Activated CD8-positive, alpha-beta T cell treated with anti-CD3 and anti-CD28 coated beads for 36 hours (primary cell): ENCODE measurements at regions of chr22 and their contacts with region 1.

Region 1: GRCh38 chr22:25067851-25068421 is 115.4 kb downstream of the KIAA1671 start:
- DNase-seq: peak; percentile 90
- ATAC-seq: peak; percentile 74
- H3K4me3 Mint-ChIP-seq: peak overlapping the region; percentile 78
- H3K27ac Mint-ChIP-seq: peak overlapping the region; percentile 97
- H3K4me1 Mint-ChIP-seq: peaks cover 91% of the 10 kb centered on the region
- H3K27me3 Mint-ChIP-seq: no peaks in the 10 kb centered on the region
- CTCF ChIP-seq: no peak

Region 2: DNA sequence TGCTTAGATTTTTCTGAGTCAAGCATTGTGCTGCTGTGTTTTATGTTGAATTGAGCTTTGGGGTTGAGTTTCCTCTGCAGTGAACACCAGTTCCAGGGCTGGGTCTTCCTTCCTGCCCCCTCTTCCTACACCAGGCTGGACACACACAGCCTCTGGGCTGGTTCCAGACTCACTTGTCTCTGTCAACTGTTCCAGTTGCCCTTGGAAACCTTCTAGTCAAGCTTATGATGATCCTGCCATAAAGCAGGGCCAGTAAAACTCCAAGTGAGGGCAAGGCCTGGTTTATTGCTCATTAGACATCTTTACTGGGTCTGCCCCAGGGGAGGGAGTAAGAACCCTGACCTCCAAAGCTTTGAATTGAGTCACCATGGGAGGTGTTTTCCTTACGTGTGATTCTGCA is 54.3 kb before region 1 on chr22:
- CTCF ChIA-PET with region 1: no interaction called
- POLR2A ChIA-PET with region 1: no interaction called
- intact Hi-C with region 1: no loop called
- DNase-seq: no peak
- ATAC-seq: no peak
- H3K4me3 Mint-ChIP-seq: no peak overlapping the region
- H3K27ac Mint-ChIP-seq: no peak overlapping the region
- H3K4me1 Mint-ChIP-seq: no peaks in the 10 kb centered on the region
- H3K27me3 Mint-ChIP-seq: no peaks in the 10 kb centered on the region
- CTCF ChIP-seq: no peak

Region 3: GRCh38 chr22:25027959-25028840 is 39.7 kb before region 1 on chr22:
- CTCF ChIA-PET with region 1: no interaction called
- POLR2A ChIA-PET with region 1: no interaction called
- intact Hi-C with region 1: no loop called
- DNase-seq: peak; percentile 43
- ATAC-seq: no peak
- H3K4me3 Mint-ChIP-seq: no peak overlapping the region
- H3K27ac Mint-ChIP-seq: no peak overlapping the region
- H3K4me1 Mint-ChIP-seq: peaks cover 6% of the 10 kb centered on the region
- H3K27me3 Mint-ChIP-seq: no peaks in the 10 kb centered on the region
- CTCF ChIP-seq: no peak

Region 4: DNA sequence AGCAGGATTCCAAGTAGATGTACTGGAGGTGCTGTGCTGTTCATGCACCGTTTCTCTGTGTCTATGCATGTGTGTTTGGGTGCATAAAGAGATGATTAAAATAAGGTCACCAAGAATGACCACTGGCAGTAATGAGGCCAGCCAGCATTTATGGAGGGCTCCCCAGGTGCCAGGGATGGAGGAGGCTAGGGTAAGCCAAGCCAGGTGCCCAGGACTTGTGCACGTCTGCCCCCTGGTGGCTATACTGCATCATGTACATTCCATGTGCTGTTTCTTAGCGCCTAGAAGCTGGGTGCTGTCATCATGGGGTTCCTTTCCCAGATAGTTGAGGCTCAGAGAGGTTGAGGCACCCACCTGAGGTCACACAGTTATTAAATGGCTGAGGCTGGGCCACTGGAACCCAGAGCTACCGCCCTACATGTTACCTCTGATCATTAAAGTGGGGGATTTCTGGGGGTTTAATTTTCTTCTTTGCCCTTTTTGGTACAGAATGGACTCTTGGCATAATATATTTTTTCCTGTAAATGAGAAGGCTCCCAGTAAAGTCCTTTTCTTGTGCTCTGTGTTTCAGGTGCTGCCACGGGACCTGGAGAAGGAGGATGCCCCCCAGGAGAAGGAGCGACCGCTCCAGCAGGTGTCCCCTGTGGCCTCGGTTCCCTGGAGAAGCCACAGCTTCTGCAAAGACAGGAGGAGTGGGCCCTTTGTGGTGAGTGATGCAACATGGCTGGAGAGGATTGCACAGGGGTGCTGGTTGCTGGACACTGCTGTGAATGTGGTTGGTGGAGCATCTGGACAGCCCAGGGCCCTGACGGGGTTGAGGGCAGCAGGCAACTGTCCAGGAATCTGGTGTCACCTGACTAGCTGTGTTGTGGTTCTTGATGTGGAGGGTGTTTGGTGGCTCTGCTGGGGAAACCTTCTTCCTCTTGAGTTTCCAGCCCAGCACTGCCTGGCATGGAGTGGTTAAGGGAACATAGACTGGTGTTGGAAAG is 19.0 kb before region 1 on chr22:
- CTCF ChIA-PET with region 1: interaction called, 45 read pairs
- POLR2A ChIA-PET with region 1: no interaction called
- intact Hi-C with region 1: no loop called
- DNase-seq: peak; percentile 83
- ATAC-seq: peak; percentile 98
- H3K4me3 Mint-ChIP-seq: no peak overlapping the region
- H3K27ac Mint-ChIP-seq: no peak overlapping the region
- H3K4me1 Mint-ChIP-seq: peaks cover 6% of the 10 kb centered on the region
- H3K27me3 Mint-ChIP-seq: no peaks in the 10 kb centered on the region
- CTCF ChIP-seq: peak; percentile 80

Region 5: GRCh38 chr22:25081409-25081824 is 13.5 kb after region 1 on chr22:
- CTCF ChIA-PET with region 1: interaction called, 23 read pairs
- POLR2A ChIA-PET with region 1: interaction called, 44 read pairs
- intact Hi-C with region 1: no loop called
- DNase-seq: peak; percentile 79
- ATAC-seq: peak; percentile 19
- H3K4me3 Mint-ChIP-seq: no peak overlapping the region
- H3K27ac Mint-ChIP-seq: no peak overlapping the region
- H3K4me1 Mint-ChIP-seq: peaks cover 85% of the 10 kb centered on the region
- H3K27me3 Mint-ChIP-seq: no peaks in the 10 kb centered on the region
- CTCF ChIP-seq: peak; percentile 72

Region 6: DNA sequence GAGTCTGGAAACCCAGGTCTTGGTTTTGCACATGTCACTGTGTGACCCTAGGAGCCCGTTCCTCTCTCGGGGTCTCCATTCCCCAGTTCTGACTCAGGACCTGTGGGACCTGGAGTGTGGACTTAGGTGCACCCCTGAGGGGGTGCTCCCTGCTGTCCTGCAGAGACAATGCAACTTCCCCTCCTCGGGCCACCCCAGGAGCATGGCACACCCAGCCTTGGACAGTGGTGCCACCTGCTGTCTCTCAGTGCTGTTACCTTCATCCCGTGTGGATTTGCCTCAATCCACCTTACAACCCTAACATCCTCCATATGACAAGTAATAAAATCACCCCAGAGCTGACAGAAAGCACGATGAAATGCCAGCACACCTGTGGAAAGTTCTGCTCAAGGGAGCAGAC is 104.2 kb after region 1 on chr22:
- CTCF ChIA-PET with region 1: interaction called, 3 read pairs
- POLR2A ChIA-PET with region 1: no interaction called
- intact Hi-C with region 1: loop called (anchors 10 kb)
- DNase-seq: peak; percentile 66
- ATAC-seq: peak; percentile 84
- H3K4me3 Mint-ChIP-seq: no peak overlapping the region
- H3K27ac Mint-ChIP-seq: no peak overlapping the region
- H3K4me1 Mint-ChIP-seq: no peaks in the 10 kb centered on the region
- H3K27me3 Mint-ChIP-seq: no peaks in the 10 kb centered on the region
- CTCF ChIP-seq: peak; percentile 65

Region 7: DNA sequence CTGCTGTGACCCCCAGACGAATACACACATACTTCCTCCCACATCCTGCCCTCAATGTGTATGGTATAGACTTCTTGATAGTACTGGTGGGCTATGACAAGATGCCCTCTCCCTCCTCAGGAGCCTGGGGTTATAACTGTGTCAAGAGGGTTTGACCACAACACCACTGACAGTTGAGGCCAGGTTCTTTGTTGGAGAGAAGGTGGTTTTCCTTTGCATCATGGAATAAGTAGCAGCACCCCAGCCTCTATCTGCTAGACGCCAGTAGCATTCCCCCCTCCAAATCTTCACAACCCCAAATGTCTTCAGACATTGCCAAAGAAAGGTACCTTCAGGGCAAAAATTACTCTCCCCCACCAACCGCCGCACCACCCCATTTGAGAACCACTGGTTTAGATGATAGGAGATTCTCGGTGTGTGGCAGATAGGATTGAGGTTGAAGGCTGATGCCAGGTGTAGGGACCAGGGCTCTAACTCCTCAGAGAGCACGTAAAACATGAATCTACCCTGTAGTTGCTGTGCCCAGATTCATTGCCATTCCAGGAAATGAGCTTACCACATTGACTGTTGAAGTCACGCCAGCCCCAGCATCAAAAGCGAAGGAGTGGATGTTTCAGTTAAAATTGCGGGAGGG is 668.6 kb after region 1 on chr22:
- CTCF ChIA-PET with region 1: no interaction called
- POLR2A ChIA-PET with region 1: no interaction called
- intact Hi-C with region 1: loop called (anchors 10 kb)
- DNase-seq: peak; percentile 88
- ATAC-seq: peak; percentile 85
- H3K4me3 Mint-ChIP-seq: peak overlapping the region; percentile 60
- H3K27ac Mint-ChIP-seq: peak overlapping the region; percentile 99
- H3K4me1 Mint-ChIP-seq: peaks cover 48% of the 10 kb centered on the region
- H3K27me3 Mint-ChIP-seq: peaks cover 3% of the 10 kb centered on the region
- CTCF ChIP-seq: no peak